SK-N-SH (cell line): ENCODE measurements at regions of chr2 and their contacts with region 1.

Region 1: DNA sequence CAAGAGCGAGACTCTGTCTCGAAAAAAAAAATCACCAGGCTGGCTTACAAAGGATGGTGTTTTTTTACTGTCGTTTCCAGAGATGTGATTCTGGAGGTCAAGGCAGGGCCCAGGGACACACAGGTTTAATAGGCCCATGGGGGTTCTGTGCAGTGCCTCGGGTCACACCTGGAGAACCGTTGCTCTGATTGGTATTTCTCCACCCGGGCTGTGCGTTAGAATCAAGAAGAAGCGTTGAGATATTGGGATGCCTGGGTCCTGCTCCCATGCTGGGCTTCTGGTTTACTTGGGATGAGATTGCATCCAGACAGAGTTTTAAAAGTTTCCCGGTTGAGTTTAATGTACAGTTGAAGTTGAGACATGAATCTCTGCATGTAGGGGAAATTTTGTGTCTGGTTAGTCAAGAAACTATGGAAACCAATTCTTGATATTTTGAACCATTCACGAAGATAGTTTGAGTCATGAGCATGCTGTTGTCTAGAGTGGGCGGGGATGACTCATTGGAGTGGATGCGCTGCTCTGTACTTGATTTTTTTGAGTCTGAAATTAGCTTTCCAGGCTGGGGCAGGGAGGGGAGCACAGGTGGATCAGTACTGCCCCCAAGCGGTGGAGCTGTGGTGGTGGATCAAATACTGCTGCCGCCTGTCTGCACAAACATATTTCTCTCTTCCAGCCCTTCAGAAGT is 50.1 kb downstream of the GREB1 start:
- DNase-seq: peak; percentile 95
- H3K4me3 ChIP-seq: no peak overlapping the region; a peak in 1 of 4 replicates
- H3K27ac ChIP-seq: peak overlapping the region in 1 of 2 experiments; percentile 80; a peak in 2 of 4 replicates
- H3K4me1 ChIP-seq: no peaks in the 10 kb centered on the region; a peak in 2 of 4 replicates
- H3K27me3 ChIP-seq: no peaks in the 10 kb centered on the region
- CTCF ChIP-seq: peak; percentile 100
- EP300 ChIP-seq: peak in 1 of 2 experiments; percentile 12; a peak in 1 of 4 replicates
- RAD21 ChIP-seq: peak; percentile 100

Region 2: DNA sequence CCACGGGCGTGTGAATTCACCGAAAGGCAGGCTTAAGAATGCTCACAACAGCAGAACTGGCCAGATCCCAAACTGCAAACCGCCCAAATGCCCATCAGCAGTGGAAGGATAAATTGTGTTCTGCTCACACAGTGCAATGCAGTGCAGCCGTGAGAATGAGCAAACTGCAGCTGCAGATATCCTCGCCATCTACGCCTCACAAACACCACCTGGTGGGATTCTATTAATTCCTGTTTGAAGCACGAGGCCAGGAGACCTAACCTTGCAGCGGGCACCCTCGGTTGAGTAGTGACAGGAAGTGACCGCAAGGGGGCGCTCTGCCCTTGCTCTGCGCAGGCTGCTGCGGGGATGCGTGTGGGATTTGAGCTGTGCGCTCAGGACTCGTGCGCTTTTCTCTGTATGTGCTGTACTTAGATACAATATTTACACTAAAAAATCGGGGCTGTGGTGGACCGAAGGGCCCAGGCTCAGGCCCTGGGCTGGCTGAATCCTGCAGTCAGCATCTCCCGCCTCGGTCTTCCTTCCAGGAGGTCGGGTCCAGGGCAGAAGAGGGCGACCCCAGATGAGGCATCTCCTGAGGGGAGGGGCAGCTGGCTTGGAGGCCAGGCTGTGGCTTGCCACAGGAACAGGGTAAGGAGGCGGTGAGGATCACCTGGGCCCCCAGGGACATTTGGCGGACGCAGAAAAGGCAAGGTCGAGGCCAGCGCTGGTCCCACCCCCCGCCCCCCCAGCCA is 751.6 kb before region 1 on chr2:
- CTCF ChIA-PET with region 1: interaction called, 13 read pairs
- POLR2A ChIA-PET with region 1: no interaction called
- DNase-seq: peak; percentile 98
- H3K4me3 ChIP-seq: peak overlapping the region; percentile 14 to 33; a peak in 2 of 4 replicates
- H3K27ac ChIP-seq: no peak overlapping the region
- H3K4me1 ChIP-seq: peaks cover 0 to 29% of the 10 kb centered on the region in 2 experiments; a peak in 1 of 4 replicates
- H3K27me3 ChIP-seq: peaks cover 33% of the 10 kb centered on the region; the same call in 1 of the 2 replicates
- CTCF ChIP-seq: peak; percentile 99
- EP300 ChIP-seq: no peak
- RAD21 ChIP-seq: peak; percentile 100

Region 3: DNA sequence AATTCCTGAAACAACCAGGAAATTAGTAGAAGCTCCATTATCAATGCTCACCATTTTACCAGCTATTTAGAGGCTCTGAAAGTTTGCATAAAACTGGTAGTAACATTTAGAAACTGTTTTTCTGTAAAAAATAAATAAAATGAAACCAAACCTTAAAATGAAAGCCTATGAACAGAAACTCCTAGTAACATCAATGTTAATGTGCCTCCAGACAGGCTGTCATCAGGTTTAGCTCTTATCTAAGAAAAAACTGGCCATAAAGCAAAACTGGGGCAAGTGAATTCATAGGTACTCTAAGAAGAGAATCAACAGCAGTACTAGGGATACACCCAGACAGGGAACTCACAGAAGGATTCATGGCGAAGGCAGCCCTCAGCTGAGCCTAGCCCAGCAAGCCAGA is 126.0 kb before region 1 on chr2:
- CTCF ChIA-PET with region 1: interaction called, 189 read pairs
- POLR2A ChIA-PET with region 1: no interaction called
- DNase-seq: no peak
- H3K4me3 ChIP-seq: no peak overlapping the region
- H3K27ac ChIP-seq: peak overlapping the region in 1 of 2 experiments; percentile 17; a peak in 1 of 4 replicates
- H3K4me1 ChIP-seq: peaks cover under 1 to 8% of the 10 kb centered on the region in 2 experiments; a peak in 2 of 4 replicates
- H3K27me3 ChIP-seq: no peaks in the 10 kb centered on the region
- CTCF ChIP-seq: no peak
- EP300 ChIP-seq: no peak
- RAD21 ChIP-seq: no peak

Region 4: DNA sequence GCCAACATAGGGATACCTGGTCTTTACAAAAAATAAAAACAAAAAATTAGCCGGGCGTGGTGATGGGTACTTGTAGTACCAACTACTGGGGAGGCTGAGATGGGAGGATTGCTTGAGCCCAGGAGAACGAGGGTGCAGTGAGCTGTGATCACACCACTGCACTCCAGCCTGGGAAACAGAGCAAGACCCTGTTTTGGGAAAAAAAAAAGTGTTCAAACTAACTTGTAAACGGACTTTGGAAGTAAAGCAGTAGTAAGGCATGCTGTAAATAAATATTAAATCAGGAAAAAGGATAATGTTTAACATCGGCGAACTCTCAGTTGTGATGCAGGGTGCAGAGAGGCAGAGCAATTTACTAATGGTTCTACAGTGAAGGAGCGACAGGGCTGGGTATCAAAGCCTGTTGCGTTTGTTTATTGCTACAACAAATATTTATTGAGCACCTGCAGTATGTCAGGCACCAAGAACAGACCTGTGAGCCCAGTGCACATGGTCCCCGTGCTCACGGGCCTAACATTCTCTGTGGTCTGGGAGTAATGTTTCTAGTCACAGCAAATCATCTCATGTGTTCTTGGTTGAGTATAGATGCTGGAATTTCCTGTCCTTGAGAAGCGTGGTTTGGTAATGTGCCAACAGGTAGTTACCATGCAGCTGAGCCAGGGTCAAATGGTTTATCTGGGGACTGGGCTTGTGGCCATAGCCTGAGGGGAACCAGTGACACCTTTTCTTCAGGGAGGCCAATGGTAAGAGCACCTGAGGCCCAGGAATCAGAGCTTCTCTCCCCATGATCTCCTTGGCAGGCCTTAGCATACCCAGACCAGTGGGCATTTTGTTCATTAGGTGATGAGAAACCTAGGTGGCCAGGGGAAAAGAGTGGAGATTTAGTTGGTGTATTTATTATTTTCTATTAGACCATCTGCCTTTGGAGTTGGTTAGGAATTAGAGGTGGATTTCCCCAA is 78.1 kb before region 1 on chr2:
- CTCF ChIA-PET with region 1: interaction called, 170 read pairs
- POLR2A ChIA-PET with region 1: no interaction called
- DNase-seq: no peak
- H3K4me3 ChIP-seq: no peak overlapping the region
- H3K27ac ChIP-seq: no peak overlapping the region
- H3K4me1 ChIP-seq: peaks cover 0 to 13% of the 10 kb centered on the region in 2 experiments; a peak in 2 of 4 replicates
- H3K27me3 ChIP-seq: no peaks in the 10 kb centered on the region
- CTCF ChIP-seq: no peak
- EP300 ChIP-seq: no peak
- RAD21 ChIP-seq: no peak

Region 5: DNA sequence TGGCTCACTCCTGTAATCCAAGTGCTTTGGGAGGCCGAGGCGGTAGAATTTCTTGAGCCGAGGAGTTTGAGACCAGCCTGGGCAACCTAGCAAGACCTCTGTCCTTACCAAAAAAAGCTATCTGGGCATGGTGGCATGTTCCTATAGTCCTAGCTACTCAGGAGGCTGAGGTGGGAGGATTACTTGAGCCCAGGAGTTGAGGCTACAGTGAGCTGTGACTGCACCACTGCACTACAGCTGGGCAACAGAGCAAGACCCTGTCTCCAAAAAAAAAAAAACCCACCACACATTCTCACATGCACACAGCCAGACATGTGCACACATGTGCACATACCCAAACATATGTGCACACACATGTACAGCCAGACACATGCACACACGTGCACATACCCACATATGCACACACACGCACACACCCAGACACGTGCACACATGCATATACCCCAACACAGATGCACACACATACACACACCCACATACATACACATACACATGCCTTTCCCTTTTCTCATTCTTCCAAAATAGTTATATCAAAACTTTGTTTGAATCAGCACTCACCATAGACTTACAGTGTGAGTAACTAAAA is 36.0 kb before region 1 on chr2:
- CTCF ChIA-PET with region 1: interaction called, 294 read pairs
- POLR2A ChIA-PET with region 1: interaction called, 3 read pairs
- DNase-seq: no peak
- H3K4me3 ChIP-seq: no peak overlapping the region
- H3K27ac ChIP-seq: no peak overlapping the region
- H3K4me1 ChIP-seq: 0 out of 4 replicates have a peak, but pooled peaks cover 0 to 2% of the 10 kb centered on the region in 2 experiments
- H3K27me3 ChIP-seq: no peaks in the 10 kb centered on the region
- CTCF ChIP-seq: no peak
- EP300 ChIP-seq: no peak
- RAD21 ChIP-seq: no peak

Region 6: GRCh38 chr2:11610624-11611242 is 26.8 kb after region 1 on chr2:
- CTCF ChIA-PET with region 1: interaction called, 119 read pairs
- POLR2A ChIA-PET with region 1: no interaction called
- DNase-seq: no peak
- H3K4me3 ChIP-seq: no peak overlapping the region
- H3K27ac ChIP-seq: no peak overlapping the region
- H3K4me1 ChIP-seq: no peaks in the 10 kb centered on the region
- H3K27me3 ChIP-seq: no peaks in the 10 kb centered on the region
- CTCF ChIP-seq: no peak
- EP300 ChIP-seq: no peak
- RAD21 ChIP-seq: no peak

Region 7: GRCh38 chr2:12192762-12193161 is 608.8 kb after region 1 on chr2:
- CTCF ChIA-PET with region 1: no interaction called
- POLR2A ChIA-PET with region 1: no interaction called
- DNase-seq: no peak
- H3K4me3 ChIP-seq: no peak overlapping the region
- H3K27ac ChIP-seq: no peak overlapping the region
- H3K4me1 ChIP-seq: no peaks in the 10 kb centered on the region
- H3K27me3 ChIP-seq: no peaks in the 10 kb centered on the region
- CTCF ChIP-seq: no peak
- EP300 ChIP-seq: no peak
- RAD21 ChIP-seq: no peak